ENCODE measurements at regions of chr21 and their contacts with region 1.

Region 1: GRCh38 chr21:39441502-39442475 is 3.8 kb downstream of the LCA5L start:
- DNase-seq: peak; percentile 59 to 83 (median 81)
- H3K4me3 ChIP-seq: no peak overlapping the region
- H3K27ac ChIP-seq: no peak overlapping the region
- H3K4me1 ChIP-seq: peaks cover 0 to 18% (median 12%) of the 10 kb centered on the region in 4 experiments
- H3K27me3 ChIP-seq: no peaks in the 10 kb centered on the region

Region 2: DNA sequence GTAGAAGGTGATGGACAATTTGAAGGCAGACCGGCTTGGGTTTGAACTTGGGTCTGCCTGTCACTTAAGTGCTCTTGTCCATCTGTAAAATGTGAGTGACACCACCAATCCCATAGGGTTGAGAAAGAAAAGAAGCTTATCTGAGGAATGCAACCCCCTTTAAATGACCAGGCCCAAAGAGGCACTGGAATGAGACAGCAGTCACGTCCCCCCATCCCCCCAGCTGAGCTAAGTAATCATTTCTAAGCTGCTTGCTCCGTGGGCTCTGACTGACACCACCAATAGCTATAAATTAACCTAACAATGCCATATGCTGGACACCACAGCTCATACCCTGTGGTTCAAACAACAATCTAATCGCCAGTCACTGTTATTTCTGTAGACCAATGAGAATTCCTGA is 11.3 kb before region 1 on chr21:
- CTCF ChIA-PET with region 1: interaction called, 10 read pairs
- POLR2A ChIA-PET with region 1: no interaction called
- DNase-seq: no peak
- H3K4me3 ChIP-seq: no peak overlapping the region
- H3K27ac ChIP-seq: no peak overlapping the region
- H3K4me1 ChIP-seq: no peaks in the 10 kb centered on the region
- H3K27me3 ChIP-seq: no peaks in the 10 kb centered on the region

Region 3: GRCh38 chr21:39461419-39461818 is 19.6 kb after region 1 on chr21:
- CTCF ChIA-PET with region 1: no interaction called
- POLR2A ChIA-PET with region 1: no interaction called
- DNase-seq: no peak
- H3K4me3 ChIP-seq: no peak overlapping the region
- H3K27ac ChIP-seq: no peak overlapping the region
- H3K4me1 ChIP-seq: no peaks in the 10 kb centered on the region
- H3K27me3 ChIP-seq: no peaks in the 10 kb centered on the region